CD8-positive, alpha-beta T cell (primary cell): ENCODE measurements at regions of chr15 and their contacts with region 1.

Region 1: GRCh38 chr15:78872972-78873792 is 492 bp downstream of the MORF4L1 start:
- DNase-seq: peak; percentile 73 to 97 (median 88)
- ATAC-seq: peak; percentile 63
- H3K4me3 ChIP-seq: peak overlapping the region; percentile 97 to 100
- H3K4me3 Mint-ChIP-seq: peak overlapping the region; percentile 97
- H3K27ac ChIP-seq: peak overlapping the region; percentile 100
- H3K27ac Mint-ChIP-seq: peak overlapping the region; percentile 99
- H3K4me1 ChIP-seq: peaks cover 37% of the 10 kb centered on the region
- H3K4me1 Mint-ChIP-seq: peaks cover 40% of the 10 kb centered on the region
- H3K27me3 ChIP-seq: no peaks in the 10 kb centered on the region
- H3K27me3 Mint-ChIP-seq: no peaks in the 10 kb centered on the region
- CTCF ChIP-seq: peak; percentile 28

Region 2: DNA sequence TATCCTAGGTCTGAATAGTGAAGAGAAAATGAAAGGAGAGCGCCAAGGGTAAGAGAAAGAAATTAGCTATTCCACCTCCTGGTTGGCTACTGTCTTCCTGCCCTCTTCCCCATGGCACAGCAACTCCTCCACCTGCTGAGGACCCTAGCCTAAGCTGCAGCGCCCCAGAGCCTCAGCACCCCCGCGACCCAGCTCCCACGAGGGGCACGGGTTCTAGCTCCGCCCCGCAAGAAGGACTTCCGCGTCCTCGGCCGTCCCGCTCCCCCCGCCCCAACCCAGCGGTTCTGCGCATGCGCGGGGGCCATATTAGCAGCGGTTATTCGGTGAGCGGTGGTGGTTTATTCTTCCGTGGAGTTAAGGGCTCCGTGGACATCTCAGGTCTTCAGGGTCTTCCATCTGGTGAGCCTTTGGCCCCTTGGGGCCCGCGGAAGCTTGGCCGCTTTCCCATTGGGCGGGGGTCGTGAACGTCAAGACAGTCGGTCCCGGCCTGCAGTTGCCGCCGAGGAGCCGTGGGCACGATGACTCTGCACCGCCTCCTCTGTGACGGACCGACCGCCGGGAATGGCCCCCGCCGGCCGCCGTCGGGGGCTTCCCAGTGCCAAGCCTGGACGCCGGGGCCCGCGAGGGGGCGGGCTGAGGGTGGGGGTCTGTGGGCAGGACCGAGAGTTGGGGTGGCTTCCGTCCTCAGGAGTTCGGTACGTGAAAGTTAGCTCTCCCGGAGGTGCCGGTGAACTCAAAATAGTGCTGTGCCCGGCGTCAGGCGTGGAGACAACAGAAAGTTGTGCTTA is 332.8 kb before region 1 on chr15 and contains the start of gene PSMA4:
- CTCF ChIA-PET with region 1: interaction called, 3 read pairs
- POLR2A ChIA-PET with region 1: interaction called, 5 read pairs
- intact Hi-C with region 1: loop called (anchors 5 kb)
- DNase-seq: peak; percentile 86 to 98 (median 95)
- ATAC-seq: peak; percentile 83
- H3K4me3 ChIP-seq: peak within 1 kb of the TSS; percentile 85 to 96
- H3K4me3 Mint-ChIP-seq: peak within 1 kb of the TSS; percentile 88
- H3K27ac ChIP-seq: peak within 1 kb of the TSS; percentile 89 to 97
- H3K27ac Mint-ChIP-seq: peak within 1 kb of the TSS; percentile 95
- H3K4me1 ChIP-seq: peaks cover 28% of the 10 kb centered on the region
- H3K4me1 Mint-ChIP-seq: peaks cover 31% of the 10 kb centered on the region
- H3K27me3 ChIP-seq: no peaks in the 10 kb centered on the region
- H3K27me3 Mint-ChIP-seq: no peaks in the 10 kb centered on the region
- CTCF ChIP-seq: no peak
- total RNA-seq, gene PSMA4: 72.8 to 79.4 TPM

Region 3: GRCh38 chr15:78695854-78696253 is 177.3 kb before region 1 on chr15:
- CTCF ChIA-PET with region 1: no interaction called
- POLR2A ChIA-PET with region 1: no interaction called
- intact Hi-C with region 1: no loop called
- DNase-seq: peak in 1 of 9 experiments; percentile 19
- ATAC-seq: no peak
- H3K4me3 ChIP-seq: no peak overlapping the region
- H3K4me3 Mint-ChIP-seq: no peak overlapping the region
- H3K27ac ChIP-seq: no peak overlapping the region
- H3K27ac Mint-ChIP-seq: no peak overlapping the region
- H3K4me1 ChIP-seq: no peaks in the 10 kb centered on the region
- H3K4me1 Mint-ChIP-seq: no peaks in the 10 kb centered on the region
- H3K27me3 ChIP-seq: no peaks in the 10 kb centered on the region
- H3K27me3 Mint-ChIP-seq: no peaks in the 10 kb centered on the region
- CTCF ChIP-seq: no peak

Region 4: GRCh38 chr15:78761891-78762385 is 111.2 kb before region 1 on chr15:
- CTCF ChIA-PET with region 1: no interaction called
- POLR2A ChIA-PET with region 1: no interaction called
- intact Hi-C with region 1: loop called in 1 of 2 experiments (anchors 5 kb)
- DNase-seq: no peak
- ATAC-seq: no peak
- H3K4me3 ChIP-seq: peak overlapping the region in 1 of 2 experiments; percentile 45
- H3K4me3 Mint-ChIP-seq: peak overlapping the region; percentile 55
- H3K27ac ChIP-seq: peak overlapping the region; percentile 39 to 71
- H3K27ac Mint-ChIP-seq: peak overlapping the region; percentile 85
- H3K4me1 ChIP-seq: peaks cover 20% of the 10 kb centered on the region
- H3K4me1 Mint-ChIP-seq: peaks cover 26% of the 10 kb centered on the region
- H3K27me3 ChIP-seq: no peaks in the 10 kb centered on the region
- H3K27me3 Mint-ChIP-seq: no peaks in the 10 kb centered on the region
- CTCF ChIP-seq: no peak

Region 5: GRCh38 chr15:78859971-78860732 is 13.0 kb before region 1 on chr15:
- CTCF ChIA-PET with region 1: interaction called, 5 read pairs
- POLR2A ChIA-PET with region 1: interaction called, 25 read pairs
- intact Hi-C with region 1: loop called (anchors 1 kb)
- DNase-seq: peak; percentile 28 to 79 (median 56)
- ATAC-seq: peak; percentile 83
- H3K4me3 ChIP-seq: peak overlapping the region; percentile 52 to 55
- H3K4me3 Mint-ChIP-seq: peak overlapping the region; percentile 85
- H3K27ac ChIP-seq: no peak overlapping the region
- H3K27ac Mint-ChIP-seq: peak overlapping the region; percentile 87
- H3K4me1 ChIP-seq: no peaks in the 10 kb centered on the region
- H3K4me1 Mint-ChIP-seq: peaks cover 2% of the 10 kb centered on the region
- H3K27me3 ChIP-seq: no peaks in the 10 kb centered on the region
- H3K27me3 Mint-ChIP-seq: no peaks in the 10 kb centered on the region
- CTCF ChIP-seq: peak; percentile 62

Region 6: GRCh38 chr15:79923515-79924395 is 1050.6 kb after region 1 on chr15:
- CTCF ChIA-PET with region 1: no interaction called
- POLR2A ChIA-PET with region 1: no interaction called
- intact Hi-C with region 1: loop called in 1 of 2 experiments (anchors 5 kb)
- DNase-seq: peak; percentile 95 to 100 (median 99)
- ATAC-seq: peak; percentile 93
- H3K4me3 ChIP-seq: peak overlapping the region; percentile 76 to 85
- H3K4me3 Mint-ChIP-seq: peak overlapping the region; percentile 91
- H3K27ac ChIP-seq: peak overlapping the region; percentile 90 to 94
- H3K27ac Mint-ChIP-seq: peak overlapping the region; percentile 93
- H3K4me1 ChIP-seq: peaks cover 11% of the 10 kb centered on the region
- H3K4me1 Mint-ChIP-seq: peaks cover 15% of the 10 kb centered on the region
- H3K27me3 ChIP-seq: no peaks in the 10 kb centered on the region
- H3K27me3 Mint-ChIP-seq: no peaks in the 10 kb centered on the region
- CTCF ChIP-seq: no peak